Common myeloid progenitor, CD34-positive (primary cell): ENCODE measurements at regions of chr2 and their contacts with region 1.

Region 1: GRCh38 chr2:25294573-25295462 is 46.9 kb downstream of the DNMT3A start:
- DNase-seq: peak; percentile 59 to 91 (median 85)
- H3K4me3 ChIP-seq: peak overlapping the region; percentile 7 to 50 (median 16)
- H3K27ac ChIP-seq: peak overlapping the region in 1 of 2 experiments; percentile 49
- H3K4me1 ChIP-seq: peaks cover 7 to 78% (median 63%) of the 10 kb centered on the region in 4 experiments
- H3K27me3 ChIP-seq: no peaks in the 10 kb centered on the region

Region 2: DNA sequence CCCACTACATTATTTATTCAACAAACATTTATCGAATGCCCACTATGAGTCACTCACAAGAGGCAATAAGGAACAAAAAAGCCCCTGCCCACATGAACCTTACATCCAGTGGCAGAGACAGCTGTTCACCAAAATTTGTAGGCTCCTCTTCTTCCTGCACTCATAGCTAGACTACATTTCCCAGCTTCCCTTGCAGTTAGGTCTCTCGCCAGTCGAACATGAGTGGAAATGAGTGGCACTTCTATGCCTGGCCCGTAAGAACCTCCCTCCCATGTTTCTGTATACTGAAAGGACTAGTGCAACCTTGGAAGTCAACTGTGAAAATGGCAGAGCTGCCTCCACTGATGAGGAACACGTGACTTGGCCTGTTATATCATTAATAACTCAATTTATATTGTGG is 823.2 kb before region 1 on chr2:
- CTCF ChIA-PET with region 1: no interaction called
- POLR2A ChIA-PET with region 1: no interaction called
- DNase-seq: peak in 2 of 3 donors; percentile 48 to 53
- H3K4me3 ChIP-seq: no peak overlapping the region
- H3K27ac ChIP-seq: no peak overlapping the region
- H3K4me1 ChIP-seq: no peaks in the 10 kb centered on the region
- H3K27me3 ChIP-seq: no peaks in the 10 kb centered on the region

Region 3: GRCh38 chr2:25041307-25041927 is 253.4 kb before region 1 on chr2:
- CTCF ChIA-PET with region 1: no interaction called
- POLR2A ChIA-PET with region 1: interaction called, 11 read pairs
- DNase-seq: peak; percentile 61 to 77 (median 66)
- H3K4me3 ChIP-seq: peak overlapping the region; percentile 8 to 77 (median 66)
- H3K27ac ChIP-seq: no peak overlapping the region
- H3K4me1 ChIP-seq: peaks cover 0 to 30% (median 30%) of the 10 kb centered on the region in 4 experiments
- H3K27me3 ChIP-seq: peaks cover 0 to 33% (median 23%) of the 10 kb centered on the region in 5 experiments

Region 4: DNA sequence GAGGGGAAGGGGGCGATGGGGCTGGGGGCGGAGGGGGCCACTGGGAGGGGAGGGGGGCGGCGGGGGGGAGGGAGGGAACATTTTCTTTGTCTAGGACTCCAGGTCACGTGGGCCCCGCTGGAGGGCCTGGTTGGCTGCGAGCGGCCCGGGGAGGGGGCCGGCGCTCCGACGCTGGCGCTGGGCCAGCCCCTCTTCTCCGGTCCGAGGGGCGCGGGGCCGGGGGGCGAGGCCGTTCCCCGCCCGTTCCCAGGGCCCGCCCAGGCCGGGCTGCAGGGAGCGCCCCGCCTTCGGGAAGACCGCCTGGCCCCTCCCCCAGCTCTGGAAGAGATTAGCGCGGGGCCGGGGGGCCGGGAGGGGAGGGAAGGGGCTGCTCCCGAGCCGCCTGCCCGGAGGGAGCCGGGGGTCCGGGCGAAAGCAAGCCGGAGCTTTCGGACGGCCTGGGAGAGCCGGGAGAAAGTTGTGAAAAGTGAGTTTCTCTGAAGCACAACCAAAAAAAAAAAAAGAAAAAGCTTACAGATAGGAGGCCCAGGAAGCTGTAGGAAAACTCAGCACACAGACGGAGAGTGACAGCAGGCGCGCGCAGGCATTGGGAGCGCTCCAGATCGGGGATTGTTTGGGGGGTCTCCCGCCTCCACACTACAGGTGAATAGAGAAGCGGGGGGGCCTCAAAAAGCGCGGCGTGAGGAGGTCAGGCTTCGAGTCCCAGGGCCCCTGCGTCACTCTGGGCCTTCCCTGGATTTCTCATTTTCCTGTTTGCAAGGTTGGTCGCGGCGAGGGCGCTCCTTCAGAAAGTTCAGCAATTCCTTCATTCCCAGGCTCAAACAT is 42.3 kb before region 1 on chr2:
- CTCF ChIA-PET with region 1: interaction called, 3 read pairs
- POLR2A ChIA-PET with region 1: interaction called, 18 read pairs
- DNase-seq: peak; percentile 52 to 68 (median 63)
- H3K4me3 ChIP-seq: peak overlapping the region; percentile 12 to 79 (median 72)
- H3K27ac ChIP-seq: peak overlapping the region in 1 of 2 experiments; percentile 49
- H3K4me1 ChIP-seq: peaks cover 3 to 41% (median 38%) of the 10 kb centered on the region in 4 experiments
- H3K27me3 ChIP-seq: no peaks in the 10 kb centered on the region

Region 5: DNA sequence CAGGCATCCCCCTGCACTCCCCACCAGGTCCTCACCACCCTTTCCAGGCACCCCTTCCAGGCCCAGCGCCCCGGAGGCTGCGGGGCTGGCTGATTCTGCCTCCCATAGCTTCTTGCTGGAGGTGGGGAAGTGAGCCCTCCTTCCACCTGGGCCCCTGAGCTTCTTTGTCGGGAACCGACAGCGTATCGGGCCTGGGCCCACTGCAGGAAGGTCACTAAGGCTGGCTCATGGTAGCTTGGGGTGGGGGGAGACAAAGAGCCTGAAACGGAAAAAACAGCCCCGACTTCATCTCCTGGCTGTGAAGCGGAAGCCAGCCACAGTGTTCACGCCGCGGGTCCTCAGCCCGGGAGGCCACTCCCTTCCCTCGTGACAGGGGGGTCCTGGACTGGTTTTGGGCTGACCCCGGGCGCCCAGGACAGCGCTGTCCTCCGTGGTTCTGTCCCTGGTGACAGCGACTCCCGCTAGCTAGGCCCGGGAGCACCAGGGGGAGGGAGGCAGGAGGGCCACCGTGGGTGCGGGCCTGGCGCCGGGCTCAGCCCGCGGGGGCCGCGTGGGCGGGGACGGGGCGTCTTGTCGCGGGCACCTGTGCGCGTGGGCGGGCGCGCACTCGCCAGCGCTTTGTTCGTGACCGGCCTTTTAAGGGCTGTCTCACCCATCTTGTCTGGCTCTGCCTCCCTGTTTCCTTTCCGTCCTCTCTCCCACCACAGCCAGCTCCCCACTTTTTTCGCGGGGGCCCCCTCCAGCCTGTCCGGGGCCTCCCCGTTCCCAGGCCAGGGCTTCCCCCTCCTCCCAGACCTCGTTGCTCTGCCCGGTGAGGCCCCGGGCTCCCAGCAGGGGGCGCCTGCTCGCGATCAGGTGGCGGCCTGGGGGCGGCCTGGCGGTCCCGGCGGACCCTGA is 18.0 kb before region 1 on chr2:
- CTCF ChIA-PET with region 1: interaction called, 112 read pairs
- POLR2A ChIA-PET with region 1: interaction called, 7 read pairs
- DNase-seq: peak; percentile 71 to 86 (median 82)
- H3K4me3 ChIP-seq: peak overlapping the region in 5 of 7 experiments; percentile 6 to 58 (median 56)
- H3K27ac ChIP-seq: peak overlapping the region; percentile 75 to 83
- H3K4me1 ChIP-seq: peaks cover 22 to 79% (median 75%) of the 10 kb centered on the region in 4 experiments
- H3K27me3 ChIP-seq: no peaks in the 10 kb centered on the region

Region 6: DNA sequence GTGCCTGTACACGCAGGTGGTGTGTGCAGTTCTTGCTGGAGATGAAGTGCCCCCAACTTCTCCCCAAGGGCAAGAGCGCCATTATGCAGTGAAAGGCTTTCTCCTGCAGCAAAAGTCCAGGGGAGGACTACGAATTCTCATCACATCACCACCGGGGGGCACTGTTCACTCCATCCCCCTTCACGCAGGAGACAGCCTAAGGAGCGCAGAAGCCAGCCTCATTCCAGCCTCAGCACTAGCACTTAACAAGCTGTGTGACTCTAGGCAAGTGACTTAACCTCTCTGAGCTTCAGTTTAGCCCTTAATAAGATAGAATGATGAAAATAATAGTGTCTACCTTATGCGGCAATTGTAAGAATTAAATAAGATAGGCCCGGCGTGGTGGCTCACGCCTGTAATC is 14.6 kb after region 1 on chr2:
- CTCF ChIA-PET with region 1: interaction called, 24 read pairs
- POLR2A ChIA-PET with region 1: no interaction called
- DNase-seq: peak; percentile 77 to 90 (median 88)
- H3K4me3 ChIP-seq: no peak overlapping the region
- H3K27ac ChIP-seq: no peak overlapping the region
- H3K4me1 ChIP-seq: peaks cover 0 to 15% (median 7%) of the 10 kb centered on the region in 4 experiments
- H3K27me3 ChIP-seq: no peaks in the 10 kb centered on the region

Region 7: DNA sequence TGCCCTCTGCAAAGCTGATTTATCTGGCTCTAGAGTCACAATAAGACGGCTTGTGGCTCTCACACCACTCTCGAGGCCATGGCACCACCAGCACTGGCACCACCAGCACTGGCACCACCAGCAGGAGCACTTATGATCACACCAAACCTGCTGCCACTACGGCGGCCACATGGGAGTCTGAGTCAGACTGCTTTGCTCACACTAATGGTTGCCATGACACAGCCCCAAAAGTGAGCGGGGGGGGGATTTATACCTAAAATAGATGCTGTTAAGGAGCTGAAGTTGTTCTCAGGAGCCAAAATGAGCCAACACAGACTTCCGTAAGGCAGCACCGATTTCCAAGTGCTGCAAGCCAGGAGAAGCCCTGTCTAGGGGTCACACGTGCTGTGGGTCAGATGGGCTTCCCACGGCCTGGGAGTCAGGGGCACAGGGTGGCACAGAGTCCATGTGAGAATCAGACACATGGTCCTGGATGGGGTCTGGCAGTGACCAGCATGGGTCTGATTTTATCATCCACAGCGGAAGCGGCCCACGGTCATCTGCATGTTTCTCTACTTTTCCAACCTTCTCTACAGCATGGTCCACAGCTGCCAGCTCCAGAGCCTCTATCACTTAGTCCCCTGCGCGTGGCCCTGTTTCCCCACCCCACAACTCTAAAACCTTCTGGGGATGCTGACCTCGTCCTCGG is 30.2 kb after region 1 on chr2:
- CTCF ChIA-PET with region 1: no interaction called
- POLR2A ChIA-PET with region 1: no interaction called
- DNase-seq: peak in 1 of 3 donors; percentile 47
- H3K4me3 ChIP-seq: no peak overlapping the region
- H3K27ac ChIP-seq: no peak overlapping the region
- H3K4me1 ChIP-seq: no peaks in the 10 kb centered on the region
- H3K27me3 ChIP-seq: no peaks in the 10 kb centered on the region